ENCODE measurements at regions of chr12 and their contacts with region 1.

Region 1: GRCh38 chr12:104358347-104359003 is 54.9 kb downstream of the EID3 start:
- DNase-seq: peak; percentile 38 to 80 (median 69)
- ATAC-seq: peak; percentile 98
- H3K4me3 ChIP-seq: no peak overlapping the region
- H3K4me3 Mint-ChIP-seq: no peak overlapping the region
- H3K27ac ChIP-seq: no peak overlapping the region
- H3K27ac Mint-ChIP-seq: no peak overlapping the region
- H3K4me1 ChIP-seq: no peaks in the 10 kb centered on the region
- H3K4me1 Mint-ChIP-seq: no peaks in the 10 kb centered on the region
- H3K27me3 ChIP-seq: no peaks in the 10 kb centered on the region
- H3K27me3 Mint-ChIP-seq: no peaks in the 10 kb centered on the region
- CTCF ChIP-seq: peak; percentile 83

Region 2: DNA sequence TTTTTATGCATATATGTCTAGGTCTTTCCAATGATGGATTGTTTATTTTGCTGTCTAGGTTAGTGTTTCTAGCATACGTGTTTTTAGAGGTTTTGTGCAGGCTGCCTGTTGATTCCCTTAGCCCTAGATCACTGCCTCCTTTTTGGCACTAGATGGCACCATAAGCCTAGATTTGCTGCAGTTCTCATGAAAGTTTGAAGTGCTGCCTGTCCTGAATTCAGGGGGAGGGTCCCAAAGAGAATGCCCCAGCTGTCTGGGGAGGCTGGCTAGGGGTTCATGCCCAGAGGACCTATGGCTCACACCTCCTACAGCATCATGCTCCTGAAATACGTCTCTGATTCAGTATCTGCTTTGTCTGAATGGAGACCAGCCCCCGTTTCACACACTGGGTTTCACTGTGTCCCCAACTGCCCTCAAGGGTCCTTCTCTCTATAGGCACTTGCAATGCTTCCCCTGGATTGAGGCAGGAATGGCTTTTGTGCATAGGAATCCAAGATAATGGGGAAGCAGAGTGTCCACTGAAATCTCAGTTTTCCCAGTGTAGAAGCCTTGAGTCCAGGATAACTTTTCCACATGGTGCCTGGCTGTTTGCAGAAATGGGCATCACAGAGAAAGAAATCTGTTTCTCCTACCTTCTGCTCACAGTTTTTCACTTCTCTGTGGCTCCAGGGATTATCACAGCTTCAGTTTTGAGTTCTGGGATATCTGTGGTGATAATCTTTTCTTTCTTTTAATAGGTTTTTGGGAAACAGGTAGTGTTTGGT is 157.1 kb before region 1 on chr12:
- CTCF ChIA-PET with region 1: interaction called, 45 read pairs
- POLR2A ChIA-PET with region 1: interaction called, 3 read pairs
- intact Hi-C with region 1: loop called (anchors 1 kb)
- DNase-seq: peak; percentile 7 to 80 (median 39)
- ATAC-seq: peak; percentile 57
- H3K4me3 ChIP-seq: no peak overlapping the region
- H3K4me3 Mint-ChIP-seq: no peak overlapping the region
- H3K27ac ChIP-seq: no peak overlapping the region
- H3K27ac Mint-ChIP-seq: no peak overlapping the region
- H3K4me1 ChIP-seq: no peaks in the 10 kb centered on the region
- H3K4me1 Mint-ChIP-seq: peaks cover 2% of the 10 kb centered on the region
- H3K27me3 ChIP-seq: no peaks in the 10 kb centered on the region
- H3K27me3 Mint-ChIP-seq: peaks cover 15% of the 10 kb centered on the region
- CTCF ChIP-seq: peak; percentile 87

Region 3: DNA sequence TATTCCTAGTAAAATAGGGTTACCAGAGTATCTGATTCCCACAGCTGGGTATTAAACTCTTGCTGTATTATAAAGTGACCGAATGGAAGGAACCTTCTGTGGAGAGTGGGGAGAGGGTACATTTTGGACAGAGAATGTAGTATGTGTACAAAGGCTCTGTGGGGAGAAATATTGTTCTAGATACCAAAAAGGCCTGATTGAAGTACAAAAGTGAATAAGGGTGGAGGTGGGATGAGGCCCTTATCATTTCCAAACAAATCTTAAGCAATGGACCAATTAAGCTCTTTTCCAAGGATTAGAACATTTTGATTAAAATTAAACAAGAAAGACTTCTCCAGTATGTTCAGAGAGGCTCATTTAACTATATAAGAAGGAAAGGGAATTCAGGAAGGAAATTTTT is 34.6 kb before region 1 on chr12:
- CTCF ChIA-PET with region 1: no interaction called
- POLR2A ChIA-PET with region 1: no interaction called
- intact Hi-C with region 1: no loop called
- DNase-seq: no peak
- ATAC-seq: no peak
- H3K4me3 ChIP-seq: no peak overlapping the region
- H3K4me3 Mint-ChIP-seq: no peak overlapping the region
- H3K27ac ChIP-seq: no peak overlapping the region
- H3K27ac Mint-ChIP-seq: no peak overlapping the region
- H3K4me1 ChIP-seq: no peaks in the 10 kb centered on the region
- H3K4me1 Mint-ChIP-seq: no peaks in the 10 kb centered on the region
- H3K27me3 ChIP-seq: no peaks in the 10 kb centered on the region
- H3K27me3 Mint-ChIP-seq: no peaks in the 10 kb centered on the region
- CTCF ChIP-seq: no peak

Region 4: DNA sequence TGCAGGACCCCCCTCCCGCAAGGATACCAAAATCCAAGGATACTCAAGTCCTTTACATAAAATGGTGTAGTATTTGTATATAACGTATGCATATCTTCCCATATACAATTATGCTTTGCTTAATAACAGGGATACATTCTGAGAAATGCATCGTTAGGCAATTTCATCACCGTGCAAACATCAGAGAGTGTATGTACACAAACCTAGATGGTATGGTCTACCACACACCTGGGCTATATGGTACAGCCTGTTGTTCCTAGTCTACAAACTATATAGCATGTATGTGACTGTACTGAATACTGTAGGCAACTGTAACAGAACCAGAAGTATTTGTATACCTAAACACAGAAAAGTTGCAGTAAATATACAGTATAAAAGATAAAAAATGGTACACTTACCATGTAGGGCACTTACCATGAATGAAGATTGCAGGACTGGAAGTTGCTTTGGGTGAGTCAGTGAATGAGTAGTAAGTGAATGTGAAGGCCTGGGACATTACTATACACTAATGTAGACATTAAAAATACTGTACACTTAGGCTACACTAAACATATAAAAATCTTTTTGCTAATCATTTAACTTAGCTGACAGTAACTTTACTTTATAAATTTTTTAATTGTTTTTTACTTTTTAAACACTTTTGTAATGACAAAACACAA is 458.5 kb after region 1 on chr12:
- CTCF ChIA-PET with region 1: no interaction called
- POLR2A ChIA-PET with region 1: no interaction called
- intact Hi-C with region 1: no loop called
- DNase-seq: no peak
- ATAC-seq: no peak
- H3K4me3 ChIP-seq: no peak overlapping the region
- H3K4me3 Mint-ChIP-seq: no peak overlapping the region
- H3K27ac ChIP-seq: no peak overlapping the region
- H3K27ac Mint-ChIP-seq: no peak overlapping the region
- H3K4me1 ChIP-seq: no peaks in the 10 kb centered on the region
- H3K4me1 Mint-ChIP-seq: no peaks in the 10 kb centered on the region
- H3K27me3 ChIP-seq: no peaks in the 10 kb centered on the region
- H3K27me3 Mint-ChIP-seq: no peaks in the 10 kb centered on the region
- CTCF ChIP-seq: no peak

Region 5: DNA sequence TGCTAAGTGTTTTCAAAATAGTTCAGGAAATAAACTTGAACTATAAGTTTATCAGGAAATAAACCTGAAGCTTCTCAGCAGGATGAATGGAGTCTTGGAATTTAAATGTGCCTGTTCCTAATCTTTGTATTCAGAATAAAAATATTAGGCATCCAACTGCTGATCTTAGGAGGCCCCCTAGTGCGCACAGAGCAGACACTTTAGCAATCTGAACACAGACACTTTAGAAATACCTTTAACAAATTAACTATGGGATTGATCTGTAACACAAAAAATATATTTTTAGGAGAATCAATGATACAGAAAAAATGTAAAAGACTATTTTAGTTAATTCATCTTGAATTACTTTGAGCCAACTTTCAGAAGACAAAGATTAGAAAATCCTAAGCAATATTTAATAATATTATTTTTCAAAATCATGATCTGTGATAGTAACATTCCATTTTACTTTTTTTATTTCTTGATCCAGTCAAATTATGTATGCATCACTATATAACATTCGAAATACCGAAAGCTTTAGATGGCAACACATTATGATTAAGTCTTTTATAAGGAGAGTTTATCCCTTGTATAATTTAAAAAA is 518.7 kb after region 1 on chr12:
- CTCF ChIA-PET with region 1: no interaction called
- POLR2A ChIA-PET with region 1: no interaction called
- intact Hi-C with region 1: loop called in 1 of 2 experiments (anchors 1 kb)
- DNase-seq: peak; percentile 3 to 60 (median 31)
- ATAC-seq: no peak
- H3K4me3 ChIP-seq: no peak overlapping the region
- H3K4me3 Mint-ChIP-seq: no peak overlapping the region
- H3K27ac ChIP-seq: no peak overlapping the region
- H3K27ac Mint-ChIP-seq: no peak overlapping the region
- H3K4me1 ChIP-seq: no peaks in the 10 kb centered on the region
- H3K4me1 Mint-ChIP-seq: no peaks in the 10 kb centered on the region
- H3K27me3 ChIP-seq: no peaks in the 10 kb centered on the region
- H3K27me3 Mint-ChIP-seq: no peaks in the 10 kb centered on the region
- CTCF ChIP-seq: peak; percentile 83

Region 6: DNA sequence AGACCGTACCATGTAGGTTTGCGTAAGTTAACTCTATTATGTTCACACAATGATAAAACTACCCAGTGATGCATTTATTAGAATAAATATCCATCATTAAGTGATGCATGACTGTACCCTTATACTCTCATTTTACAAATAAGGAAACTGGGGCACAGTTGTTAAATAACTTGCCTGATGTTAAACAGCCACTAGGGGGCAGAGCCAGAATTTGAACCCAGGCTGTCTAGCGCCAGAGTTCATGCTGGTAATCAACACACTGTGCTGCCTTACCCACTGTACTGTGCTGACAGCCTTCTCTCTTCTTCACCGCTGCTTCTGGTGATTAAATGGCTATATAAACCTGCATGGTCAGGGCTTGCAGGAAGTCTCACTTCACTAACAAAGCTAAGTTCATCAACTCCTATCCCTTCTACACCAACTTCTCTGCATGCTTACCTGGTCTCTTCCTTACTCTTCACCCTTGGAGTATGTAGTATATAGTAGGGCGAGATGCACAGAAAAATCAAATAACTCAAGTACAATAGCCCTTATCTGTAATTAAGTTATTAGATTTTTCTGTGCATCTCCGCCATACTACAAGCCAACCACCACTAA is 921.1 kb after region 1 on chr12:
- CTCF ChIA-PET with region 1: no interaction called
- POLR2A ChIA-PET with region 1: no interaction called
- intact Hi-C with region 1: no loop called
- DNase-seq: peak in 8 of 9 experiments; percentile 1 to 65 (median 34)
- ATAC-seq: peak; percentile 48
- H3K4me3 ChIP-seq: no peak overlapping the region
- H3K4me3 Mint-ChIP-seq: no peak overlapping the region
- H3K27ac ChIP-seq: no peak overlapping the region
- H3K27ac Mint-ChIP-seq: no peak overlapping the region
- H3K4me1 ChIP-seq: no peaks in the 10 kb centered on the region
- H3K4me1 Mint-ChIP-seq: no peaks in the 10 kb centered on the region
- H3K27me3 ChIP-seq: no peaks in the 10 kb centered on the region
- H3K27me3 Mint-ChIP-seq: peaks cover 10% of the 10 kb centered on the region
- CTCF ChIP-seq: peak; percentile 68

Measured in CD8-positive, alpha-beta T cell (primary cell).